ENCODE measurements at regions of chr11 and their contacts with region 1.

Region 1: GRCh38 chr11:119538753-119539152 is 115.8 kb upstream of the THY1 start:
- DNase-seq: no peak
- H3K4me3 ChIP-seq: no peak overlapping the region
- H3K27ac ChIP-seq: no peak overlapping the region
- H3K4me1 ChIP-seq: no peaks in the 10 kb centered on the region
- H3K27me3 ChIP-seq: peaks cover 63% of the 10 kb centered on the region
- CTCF ChIP-seq: no peak

Region 2: DNA sequence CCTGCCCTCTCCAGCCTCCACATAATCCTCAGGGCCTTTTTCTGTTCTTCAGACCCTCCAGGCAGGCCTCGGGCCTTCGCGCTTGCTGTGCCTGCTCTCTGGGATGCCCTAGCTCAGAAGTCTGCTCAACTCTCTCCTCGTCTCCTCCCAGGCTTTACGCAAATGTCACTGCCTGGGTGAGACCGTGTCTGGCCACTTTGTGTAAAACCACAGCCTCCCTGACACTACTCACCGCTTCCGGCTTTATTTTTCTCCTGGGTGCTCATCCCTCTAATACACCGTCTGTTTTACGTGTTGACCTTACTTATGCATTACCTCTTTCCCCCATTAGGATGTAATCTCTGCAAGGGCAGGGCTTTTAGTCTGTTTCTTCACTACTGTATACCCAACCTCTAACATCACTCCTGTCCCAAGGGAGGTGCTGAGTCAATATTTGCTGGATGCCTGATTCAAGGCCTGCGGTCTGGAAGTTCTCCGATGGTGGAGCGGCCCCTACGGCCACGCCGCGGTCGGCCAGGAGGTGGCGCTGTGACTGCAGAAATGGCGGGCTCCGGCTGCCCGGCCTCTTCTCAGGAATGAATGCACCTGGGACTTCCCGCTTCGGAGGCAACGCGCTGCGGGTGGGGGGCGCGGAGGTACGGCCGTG is 57.6 kb before region 1 on chr11:
- intact Hi-C with region 1: loop called (anchors 5 kb)
- DNase-seq: peak; percentile 70
- H3K4me3 ChIP-seq: peak overlapping the region; percentile 35
- H3K27ac ChIP-seq: no peak overlapping the region
- H3K4me1 ChIP-seq: peaks cover 6% of the 10 kb centered on the region
- H3K27me3 ChIP-seq: peaks cover 43% of the 10 kb centered on the region
- CTCF ChIP-seq: peak; percentile 95